A673 (cell line): ENCODE measurements at regions of chr6 and their contacts with region 1.

Region 1: GRCh38 chr6:57172136-57173055 is at the start of gene BAG2:
- DNase-seq: peak; percentile 96
- H3K4me3 ChIP-seq: peak within 1 kb of the TSS; percentile 83
- H3K27ac ChIP-seq: peak within 1 kb of the TSS; percentile 93
- H3K4me1 ChIP-seq: peaks cover 16% of the 10 kb centered on the region
- H3K27me3 ChIP-seq: no peaks in the 10 kb centered on the region
- CTCF ChIP-seq: no peak
- total RNA-seq, gene BAG2: 21.4 and 27.0 TPM in 2 replicates

Region 2: GRCh38 chr6:56902641-56903464 is 269.5 kb before region 1 on chr6:
- CTCF ChIA-PET with region 1: no interaction called
- POLR2A ChIA-PET with region 1: no interaction called
- intact Hi-C with region 1: loop called (anchors 10 kb)
- DNase-seq: peak; percentile 65
- H3K4me3 ChIP-seq: no peak overlapping the region
- H3K27ac ChIP-seq: no peak overlapping the region
- H3K4me1 ChIP-seq: no peaks in the 10 kb centered on the region
- H3K27me3 ChIP-seq: no peaks in the 10 kb centered on the region
- CTCF ChIP-seq: peak; percentile 86

Region 3: DNA sequence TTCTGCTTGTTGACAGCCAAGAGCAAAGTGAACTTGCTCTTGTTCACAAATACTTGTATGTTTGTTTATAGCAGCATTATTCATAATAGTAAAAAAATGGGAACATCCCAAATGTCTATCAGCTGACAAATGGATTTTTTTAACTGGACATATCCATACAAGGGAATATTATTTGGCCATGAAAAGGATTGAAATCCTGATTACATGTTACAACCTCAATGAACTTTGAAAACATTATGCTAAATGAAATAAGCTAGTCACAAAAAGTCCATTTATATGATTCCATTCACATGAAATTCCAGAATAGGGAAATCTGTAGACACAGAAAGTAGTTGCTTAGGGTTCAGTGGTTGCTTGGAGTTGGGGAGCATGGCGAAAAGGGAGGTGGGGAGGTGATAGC is 28.7 kb before region 1 on chr6:
- CTCF ChIA-PET with region 1: no interaction called
- POLR2A ChIA-PET with region 1: no interaction called
- intact Hi-C with region 1: loop called (anchors 2 kb)
- DNase-seq: no peak
- H3K4me3 ChIP-seq: no peak overlapping the region
- H3K27ac ChIP-seq: no peak overlapping the region
- H3K4me1 ChIP-seq: no peaks in the 10 kb centered on the region
- H3K27me3 ChIP-seq: no peaks in the 10 kb centered on the region
- CTCF ChIP-seq: no peak